Naive thymus-derived CD4-positive, alpha-beta T cell (primary cell): ENCODE measurements at regions of chr12 and their contacts with region 1.

Region 1: GRCh38 chr12:94149119-94149780 is 873 bp downstream of the PLXNC1 start:
- DNase-seq: peak; percentile 23 to 70 (median 45)
- ATAC-seq: peak; percentile 51
- H3K4me3 ChIP-seq: peak overlapping the region; percentile 75
- H3K4me3 Mint-ChIP-seq: peak overlapping the region; percentile 76 to 97 (median 93)
- H3K27ac ChIP-seq: peak overlapping the region; percentile 17
- H3K27ac Mint-ChIP-seq: peak overlapping the region in 3 of 9 donors; percentile 51 to 67 (median 63)
- H3K4me1 ChIP-seq: peaks cover 0 to 17% of the 10 kb centered on the region in 2 donors
- H3K4me1 Mint-ChIP-seq: peaks cover 18 to 53% (median 39%) of the 10 kb centered on the region in 7 donors
- H3K27me3 ChIP-seq: no peaks in the 10 kb centered on the region
- H3K27me3 Mint-ChIP-seq: peaks cover 0 to 31% (median 0%) of the 10 kb centered on the region in 5 donors

Region 2: DNA sequence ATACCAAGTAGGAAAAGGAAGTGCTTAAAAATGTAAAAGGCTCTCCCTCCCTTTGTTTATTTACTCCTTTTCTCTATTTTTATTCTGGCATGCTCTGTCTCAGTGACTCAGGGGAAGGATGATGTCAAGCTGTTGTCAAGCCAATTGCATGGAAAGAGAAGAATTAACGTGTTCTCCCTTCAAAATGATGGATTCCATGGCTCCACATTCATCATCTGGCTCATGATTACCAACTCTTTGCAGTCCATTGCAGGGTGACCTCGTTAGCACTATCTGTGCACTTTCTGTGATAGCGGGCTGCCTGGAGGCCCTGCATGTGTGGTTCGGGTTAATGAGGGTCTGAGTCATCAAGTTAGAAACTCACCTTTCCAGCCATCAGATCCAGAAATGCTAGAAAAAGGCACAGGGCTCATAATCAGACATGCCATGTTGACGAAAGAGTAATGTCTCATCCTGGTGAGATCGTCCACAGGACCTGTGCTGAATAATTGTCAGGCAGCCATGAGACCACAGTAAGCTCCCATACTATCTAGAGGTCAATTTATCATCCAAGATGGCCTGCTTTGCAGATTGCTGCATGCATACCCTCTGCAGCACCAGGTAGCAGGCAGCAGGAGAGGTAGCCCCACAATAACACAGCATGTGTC is 1924.4 kb before region 1 on chr12:
- CTCF ChIA-PET with region 1: no interaction called
- POLR2A ChIA-PET with region 1: no interaction called
- intact Hi-C with region 1: no loop called
- DNase-seq: no peak
- ATAC-seq: no peak
- H3K4me3 ChIP-seq: no peak overlapping the region
- H3K4me3 Mint-ChIP-seq: no peak overlapping the region
- H3K27ac ChIP-seq: no peak overlapping the region
- H3K27ac Mint-ChIP-seq: no peak overlapping the region
- H3K4me1 ChIP-seq: no peaks in the 10 kb centered on the region
- H3K4me1 Mint-ChIP-seq: peaks cover 0 to 12% (median 6%) of the 10 kb centered on the region in 7 donors
- H3K27me3 ChIP-seq: no peaks in the 10 kb centered on the region
- H3K27me3 Mint-ChIP-seq: no peaks in the 10 kb centered on the region

Region 3: DNA sequence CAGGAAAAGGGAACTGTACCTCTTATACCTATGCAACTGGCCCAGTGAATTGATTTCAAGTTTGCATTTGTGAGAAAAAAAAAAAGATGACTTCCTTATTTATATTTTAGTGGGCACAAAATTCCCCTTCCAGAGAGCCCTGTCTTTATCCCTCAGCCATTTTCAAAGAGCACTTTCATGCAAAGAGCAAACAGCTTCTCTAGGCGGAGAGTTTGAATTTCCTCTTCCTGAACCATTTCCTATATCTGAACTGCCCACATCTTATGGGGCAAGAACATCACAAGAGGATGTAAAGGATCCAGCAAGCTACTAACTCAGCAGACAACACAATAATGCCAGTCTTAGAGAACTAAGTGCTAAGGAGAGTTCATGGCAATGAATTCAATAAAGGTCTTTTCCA is 23.2 kb before region 1 on chr12:
- CTCF ChIA-PET with region 1: interaction called, 3 read pairs
- POLR2A ChIA-PET with region 1: interaction called, 5 read pairs
- intact Hi-C with region 1: loop called in 1 of 2 experiments (anchors 1 kb)
- DNase-seq: no peak
- ATAC-seq: peak; percentile 58
- H3K4me3 ChIP-seq: no peak overlapping the region
- H3K4me3 Mint-ChIP-seq: peak overlapping the region; percentile 0 to 92 (median 56)
- H3K27ac ChIP-seq: no peak overlapping the region
- H3K27ac Mint-ChIP-seq: peak overlapping the region; percentile 53 to 90 (median 70)
- H3K4me1 ChIP-seq: peaks cover 16 to 50% of the 10 kb centered on the region in 2 donors
- H3K4me1 Mint-ChIP-seq: peaks cover 46 to 62% (median 59%) of the 10 kb centered on the region in 7 donors
- H3K27me3 ChIP-seq: no peaks in the 10 kb centered on the region
- H3K27me3 Mint-ChIP-seq: peaks cover 0 to 10% (median 0%) of the 10 kb centered on the region in 5 donors

Region 4: DNA sequence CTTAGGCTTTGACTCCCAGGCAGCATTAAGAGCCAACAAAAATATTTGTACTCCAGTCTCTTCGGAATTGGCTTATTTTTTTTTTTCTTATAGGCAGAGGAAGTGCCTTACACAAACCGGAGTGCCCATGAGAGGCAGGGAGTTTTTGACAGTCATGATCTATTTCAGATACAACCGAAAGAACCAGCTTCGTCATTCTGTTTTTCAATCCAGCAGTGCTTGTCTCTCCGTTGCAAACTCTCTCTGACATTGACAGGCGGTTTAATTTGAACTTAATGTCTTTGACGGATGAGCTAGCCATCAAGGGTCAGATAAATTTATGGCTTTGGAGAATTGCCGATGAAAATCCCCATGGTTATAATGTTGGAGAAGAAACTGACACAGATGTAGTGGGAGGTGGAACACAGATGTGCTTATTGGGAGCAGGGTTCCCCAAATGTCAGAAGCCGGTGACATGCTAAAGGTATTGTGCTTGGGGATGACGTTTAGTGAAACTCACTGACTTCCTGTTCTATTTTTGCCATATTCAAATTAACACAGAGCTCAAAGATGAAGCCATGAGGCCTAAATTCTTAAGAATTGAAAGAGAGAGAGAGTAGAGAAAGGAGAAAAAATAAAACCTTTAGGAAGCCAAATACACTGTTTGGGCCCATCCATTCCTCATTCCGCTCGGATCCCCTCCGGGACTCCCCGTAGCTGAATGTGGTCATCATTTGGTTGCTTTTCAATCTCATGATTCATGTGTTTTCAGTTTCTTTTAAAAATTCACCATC is 58.8 kb after region 1 on chr12:
- CTCF ChIA-PET with region 1: interaction called, 4 read pairs
- POLR2A ChIA-PET with region 1: interaction called, 7 read pairs
- intact Hi-C with region 1: loop called (anchors 1 kb)
- DNase-seq: peak in 8 of 9 donors; percentile 24 to 55 (median 48)
- ATAC-seq: peak; percentile 86
- H3K4me3 ChIP-seq: peak overlapping the region; percentile 58
- H3K4me3 Mint-ChIP-seq: peak overlapping the region; percentile 70 to 87 (median 82)
- H3K27ac ChIP-seq: peak overlapping the region; percentile 61
- H3K27ac Mint-ChIP-seq: peak overlapping the region; percentile 90 to 98 (median 94)
- H3K4me1 ChIP-seq: peaks cover 40 to 49% of the 10 kb centered on the region in 2 donors
- H3K4me1 Mint-ChIP-seq: peaks cover 36 to 58% (median 56%) of the 10 kb centered on the region in 7 donors
- H3K27me3 ChIP-seq: no peaks in the 10 kb centered on the region
- H3K27me3 Mint-ChIP-seq: no peaks in the 10 kb centered on the region

Region 5: GRCh38 chr12:94255428-94255827 is 106.2 kb after region 1 on chr12:
- CTCF ChIA-PET with region 1: no interaction called
- POLR2A ChIA-PET with region 1: no interaction called
- intact Hi-C with region 1: no loop called
- DNase-seq: no peak
- ATAC-seq: no peak
- H3K4me3 ChIP-seq: no peak overlapping the region
- H3K4me3 Mint-ChIP-seq: no peak overlapping the region
- H3K27ac ChIP-seq: no peak overlapping the region
- H3K27ac Mint-ChIP-seq: peak overlapping the region in 1 of 9 donors; percentile 34
- H3K4me1 ChIP-seq: no peaks in the 10 kb centered on the region
- H3K4me1 Mint-ChIP-seq: peaks cover 0 to 2% (median 0%) of the 10 kb centered on the region in 7 donors
- H3K27me3 ChIP-seq: no peaks in the 10 kb centered on the region
- H3K27me3 Mint-ChIP-seq: no peaks in the 10 kb centered on the region

Region 6: GRCh38 chr12:94434171-94434570 is 284.9 kb after region 1 on chr12:
- CTCF ChIA-PET with region 1: no interaction called
- POLR2A ChIA-PET with region 1: no interaction called
- intact Hi-C with region 1: loop called (anchors 1 kb)
- DNase-seq: no peak
- ATAC-seq: no peak
- H3K4me3 ChIP-seq: no peak overlapping the region
- H3K4me3 Mint-ChIP-seq: no peak overlapping the region
- H3K27ac ChIP-seq: no peak overlapping the region
- H3K27ac Mint-ChIP-seq: no peak overlapping the region
- H3K4me1 ChIP-seq: peaks cover 0 to 9% of the 10 kb centered on the region in 2 donors
- H3K4me1 Mint-ChIP-seq: peaks cover 12 to 27% (median 22%) of the 10 kb centered on the region in 7 donors
- H3K27me3 ChIP-seq: no peaks in the 10 kb centered on the region
- H3K27me3 Mint-ChIP-seq: no peaks in the 10 kb centered on the region

Region 7: GRCh38 chr12:94762259-94762942 is 613.2 kb after region 1 on chr12:
- CTCF ChIA-PET with region 1: no interaction called
- POLR2A ChIA-PET with region 1: no interaction called
- intact Hi-C with region 1: loop called (anchors 1 to 5 kb)
- DNase-seq: no peak
- ATAC-seq: peak; percentile 22
- H3K4me3 ChIP-seq: no peak overlapping the region
- H3K4me3 Mint-ChIP-seq: peak overlapping the region in 1 of 10 donors; percentile 17
- H3K27ac ChIP-seq: no peak overlapping the region
- H3K27ac Mint-ChIP-seq: peak overlapping the region in 2 of 9 donors; percentile 7 to 36
- H3K4me1 ChIP-seq: no peaks in the 10 kb centered on the region
- H3K4me1 Mint-ChIP-seq: peaks cover 0 to 12% (median 2%) of the 10 kb centered on the region in 7 donors
- H3K27me3 ChIP-seq: no peaks in the 10 kb centered on the region
- H3K27me3 Mint-ChIP-seq: peaks cover 0 to 16% (median 9%) of the 10 kb centered on the region in 5 donors

Region 8: DNA sequence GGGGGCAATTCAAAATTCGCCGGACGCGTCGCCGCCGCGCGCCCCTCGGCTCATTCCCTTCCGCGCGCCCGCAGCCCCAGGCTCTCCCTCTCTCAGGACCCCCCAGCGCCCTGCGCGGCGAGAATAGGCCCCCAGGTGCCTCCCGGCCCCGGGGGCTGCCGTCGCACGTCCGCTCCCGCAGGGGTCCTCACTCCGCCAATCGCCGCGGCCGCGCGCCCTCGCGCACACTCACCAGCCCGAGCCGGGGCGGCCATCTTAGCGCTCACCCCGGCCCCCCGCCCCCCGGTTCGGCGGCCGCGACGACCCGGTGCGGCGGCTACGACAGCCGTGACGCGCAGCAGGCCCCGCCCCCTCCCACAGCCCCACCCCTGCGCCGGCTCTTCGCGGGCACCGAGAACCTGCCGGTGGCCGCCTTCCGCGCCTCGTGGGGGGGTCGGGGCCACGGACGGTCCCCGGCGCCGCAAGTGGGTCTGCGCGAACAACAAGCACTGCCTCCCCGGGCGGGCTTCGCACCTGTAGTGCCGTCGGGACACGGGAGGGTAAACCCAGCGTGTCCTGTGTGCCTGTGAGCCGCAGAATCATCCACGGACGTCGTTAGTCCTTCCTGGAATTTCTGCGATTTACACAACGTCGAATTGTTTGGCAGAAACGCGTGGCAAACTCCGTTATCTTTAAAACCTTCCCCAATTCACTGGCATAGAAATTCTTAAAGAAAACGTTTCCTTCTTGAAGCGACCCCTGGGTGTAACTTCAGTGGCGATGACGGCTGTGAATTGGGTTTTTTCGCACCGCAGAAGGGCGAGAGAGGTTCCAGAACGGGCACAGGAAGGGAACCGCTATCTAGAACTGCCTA is 1399.5 kb after region 1 on chr12:
- CTCF ChIA-PET with region 1: no interaction called
- POLR2A ChIA-PET with region 1: no interaction called
- intact Hi-C with region 1: loop called in 1 of 2 experiments (anchors 2 kb)
- DNase-seq: peak; percentile 66 to 81 (median 77)
- ATAC-seq: peak; percentile 94
- H3K4me3 ChIP-seq: peak overlapping the region; percentile 75
- H3K4me3 Mint-ChIP-seq: peak overlapping the region; percentile 89 to 96 (median 94)
- H3K27ac ChIP-seq: peak overlapping the region; percentile 96
- H3K27ac Mint-ChIP-seq: peak overlapping the region; percentile 70 to 98 (median 94)
- H3K4me1 ChIP-seq: peaks cover 6 to 23% of the 10 kb centered on the region in 2 donors
- H3K4me1 Mint-ChIP-seq: peaks cover 36 to 73% (median 61%) of the 10 kb centered on the region in 7 donors
- H3K27me3 ChIP-seq: no peaks in the 10 kb centered on the region
- H3K27me3 Mint-ChIP-seq: peaks cover 0 to 22% (median 7%) of the 10 kb centered on the region in 5 donors